Activated T-helper 1 cell treated with anti-CD3 and anti-CD28 coated beads, Interleukin-12 subunit alpha, Interleukin-12 subunit beta, Interleukin-2, Interleukin-4 antibody, amounts not matched to agents 30 ng/mL and 10 ng/mL and 1 ng/mL, durations not matched to agents 14 hours and 24 hours and 36 hours (primary cell): ENCODE measurements at regions of chr7 and their contacts with region 1.

Region 1: GRCh38 chr7:156892821-156893706 is at the start of gene LMBR1:
- DNase-seq: peak; percentile 92
- H3K4me3 Mint-ChIP-seq: peak within 1 kb of the TSS; percentile 95
- H3K27ac Mint-ChIP-seq: peak within 1 kb of the TSS; percentile 93
- H3K4me1 Mint-ChIP-seq: peaks cover 43% of the 10 kb centered on the region
- H3K27me3 Mint-ChIP-seq: no peaks in the 10 kb centered on the region
- total RNA-seq, gene LMBR1: 53.5 and 55.5 TPM in 2 replicates

Region 2: DNA sequence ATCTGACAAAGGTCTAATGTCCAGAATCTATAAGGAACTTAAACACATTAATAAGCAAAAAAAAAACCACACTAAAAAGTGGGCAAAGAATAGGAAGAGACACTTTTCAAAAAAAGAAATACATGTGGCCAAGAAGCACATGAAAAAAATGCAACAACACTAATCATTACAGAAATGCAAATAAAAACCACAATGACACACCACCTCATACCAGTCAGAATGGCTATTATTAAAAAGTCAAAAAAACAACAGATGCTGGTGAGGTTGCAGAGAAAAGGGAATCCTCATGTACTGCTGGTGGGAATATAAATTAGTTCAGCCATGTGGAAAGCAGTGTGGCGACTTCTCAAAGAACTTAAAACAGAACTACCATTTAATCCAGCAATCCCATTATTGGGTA is 119.1 kb before region 1 on chr7:
- intact Hi-C with region 1: loop called (anchors 2 kb)
- DNase-seq: no peak
- H3K4me3 Mint-ChIP-seq: no peak overlapping the region
- H3K27ac Mint-ChIP-seq: no peak overlapping the region
- H3K4me1 Mint-ChIP-seq: peaks cover 53% of the 10 kb centered on the region
- H3K27me3 Mint-ChIP-seq: no peaks in the 10 kb centered on the region

Region 3: GRCh38 chr7:156927571-156928405 is 34.7 kb after region 1 on chr7:
- intact Hi-C with region 1: loop called (anchors 1 kb)
- DNase-seq: no peak
- H3K4me3 Mint-ChIP-seq: no peak overlapping the region
- H3K27ac Mint-ChIP-seq: no peak overlapping the region
- H3K4me1 Mint-ChIP-seq: peaks cover 63% of the 10 kb centered on the region
- H3K27me3 Mint-ChIP-seq: peaks cover 29% of the 10 kb centered on the region

Region 4: DNA sequence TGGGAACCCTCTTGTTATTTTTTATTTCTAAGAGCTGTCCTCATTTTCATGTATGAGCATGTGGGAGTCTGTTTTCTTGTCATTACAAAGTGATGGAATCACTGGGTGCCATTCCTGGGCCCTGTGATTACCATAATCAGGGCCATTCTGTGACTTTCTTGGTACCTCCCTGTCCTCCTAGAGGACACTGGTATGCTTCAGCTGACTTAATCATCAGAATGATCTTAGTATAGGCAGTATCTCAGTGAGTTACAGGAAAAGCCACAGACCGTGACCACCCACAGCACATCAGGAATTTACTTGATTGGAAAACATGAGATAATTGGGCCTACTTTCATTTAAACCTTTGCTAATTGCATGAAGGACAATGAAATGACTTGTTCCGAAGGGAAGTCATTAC is 63.7 kb after region 1 on chr7:
- intact Hi-C with region 1: no loop called
- DNase-seq: no peak
- H3K4me3 Mint-ChIP-seq: no peak overlapping the region
- H3K27ac Mint-ChIP-seq: no peak overlapping the region
- H3K4me1 Mint-ChIP-seq: peaks cover 8% of the 10 kb centered on the region
- H3K27me3 Mint-ChIP-seq: no peaks in the 10 kb centered on the region

Region 5: DNA sequence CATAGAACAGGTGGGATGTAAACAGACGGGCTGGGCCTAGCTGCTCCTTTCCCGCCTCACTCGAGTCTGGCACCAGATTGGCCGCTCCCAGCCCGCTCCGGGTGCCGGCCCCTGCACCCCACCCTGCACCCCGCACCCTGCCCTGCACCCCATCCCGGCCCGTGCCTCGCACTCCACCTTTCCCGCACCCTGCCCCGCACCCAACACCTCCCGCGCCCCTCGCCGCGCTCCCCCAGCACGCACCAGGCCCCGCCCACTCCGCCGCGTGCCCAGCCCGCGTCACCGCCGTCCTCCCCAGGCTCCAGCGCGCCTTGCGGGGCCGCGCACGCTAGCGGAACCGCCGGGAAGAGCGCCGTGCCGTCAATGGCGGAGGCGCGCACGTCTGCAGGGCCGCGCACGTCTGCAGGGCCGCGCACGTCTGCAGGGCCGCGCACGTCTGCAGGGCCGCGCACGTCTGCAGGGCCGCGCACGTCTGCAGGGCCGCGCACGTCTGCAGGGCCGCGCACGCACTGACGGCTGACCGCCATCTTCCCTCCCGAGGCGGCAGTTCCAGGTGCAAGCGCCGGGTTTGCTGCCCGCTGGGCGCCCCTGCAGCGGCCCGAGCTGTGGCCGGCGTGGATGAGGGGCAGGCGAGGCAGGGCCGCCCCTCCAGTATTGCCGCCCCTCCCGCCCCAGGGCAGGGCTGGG is 245.5 kb after region 1 on chr7 and contains the start of gene UBE3C:
- intact Hi-C with region 1: loop called (anchors 1 kb)
- DNase-seq: peak; percentile 89
- H3K4me3 Mint-ChIP-seq: peak within 1 kb of the TSS; percentile 88
- H3K27ac Mint-ChIP-seq: peak within 1 kb of the TSS; percentile 97
- H3K4me1 Mint-ChIP-seq: peaks cover 41% of the 10 kb centered on the region
- H3K27me3 Mint-ChIP-seq: no peaks in the 10 kb centered on the region
- total RNA-seq, gene UBE3C: 91.5 and 95.8 TPM in 2 replicates

Region 6: GRCh38 chr7:157250605-157251228 is 357.7 kb after region 1 on chr7:
- intact Hi-C with region 1: no loop called
- DNase-seq: peak; percentile 31
- H3K4me3 Mint-ChIP-seq: no peak overlapping the region
- H3K27ac Mint-ChIP-seq: no peak overlapping the region
- H3K4me1 Mint-ChIP-seq: no peaks in the 10 kb centered on the region
- H3K27me3 Mint-ChIP-seq: no peaks in the 10 kb centered on the region

Region 7: GRCh38 chr7:157292699-157293412 is 399.8 kb after region 1 on chr7:
- intact Hi-C with region 1: no loop called
- DNase-seq: no peak
- H3K4me3 Mint-ChIP-seq: no peak overlapping the region
- H3K27ac Mint-ChIP-seq: no peak overlapping the region
- H3K4me1 Mint-ChIP-seq: no peaks in the 10 kb centered on the region
- H3K27me3 Mint-ChIP-seq: peaks cover 8% of the 10 kb centered on the region